H1 (cell line): ENCODE measurements at regions of chr11 and their contacts with region 1.

Region 1: GRCh38 chr11:64887757-64888405 is 9.5 kb upstream of the EHD1 start:
- DNase-seq: peak; percentile 56 to 98
- H3K4me3 ChIP-seq: peak overlapping the region in 2 of 4 experiments; percentile 10 to 33; a peak in 2 of 8 replicates
- H3K27ac ChIP-seq: no peak overlapping the region
- H3K4me1 ChIP-seq: peaks cover 0 to 11% (median 8%) of the 10 kb centered on the region in 4 experiments; a peak in 6 of 7 replicates
- H3K27me3 ChIP-seq: no peaks in the 10 kb centered on the region; a peak in 1 of 7 replicates
- CTCF ChIP-seq: peak in 2 of 3 experiments; percentile 81 to 92; a peak in 3 of 4 replicates
- EP300 ChIP-seq: no peak
- POLR2A ChIP-seq: no peak
- RAD21 ChIP-seq: peak; percentile 32 to 49

Region 2: GRCh38 chr11:64787526-64788320 is 100.2 kb before region 1 on chr11:
- CTCF ChIA-PET with region 1: no interaction called
- POLR2A ChIA-PET with region 1: no interaction called
- DNase-seq: peak in 1 of 2 experiments; percentile 89
- H3K4me3 ChIP-seq: no peak overlapping the region
- H3K27ac ChIP-seq: no peak overlapping the region
- H3K4me1 ChIP-seq: no peaks in the 10 kb centered on the region
- H3K27me3 ChIP-seq: no peaks in the 10 kb centered on the region
- CTCF ChIP-seq: peak; percentile 87 to 91 (median 90)
- EP300 ChIP-seq: no peak
- POLR2A ChIP-seq: no peak
- RAD21 ChIP-seq: peak; percentile 73 to 82

Region 3: DNA sequence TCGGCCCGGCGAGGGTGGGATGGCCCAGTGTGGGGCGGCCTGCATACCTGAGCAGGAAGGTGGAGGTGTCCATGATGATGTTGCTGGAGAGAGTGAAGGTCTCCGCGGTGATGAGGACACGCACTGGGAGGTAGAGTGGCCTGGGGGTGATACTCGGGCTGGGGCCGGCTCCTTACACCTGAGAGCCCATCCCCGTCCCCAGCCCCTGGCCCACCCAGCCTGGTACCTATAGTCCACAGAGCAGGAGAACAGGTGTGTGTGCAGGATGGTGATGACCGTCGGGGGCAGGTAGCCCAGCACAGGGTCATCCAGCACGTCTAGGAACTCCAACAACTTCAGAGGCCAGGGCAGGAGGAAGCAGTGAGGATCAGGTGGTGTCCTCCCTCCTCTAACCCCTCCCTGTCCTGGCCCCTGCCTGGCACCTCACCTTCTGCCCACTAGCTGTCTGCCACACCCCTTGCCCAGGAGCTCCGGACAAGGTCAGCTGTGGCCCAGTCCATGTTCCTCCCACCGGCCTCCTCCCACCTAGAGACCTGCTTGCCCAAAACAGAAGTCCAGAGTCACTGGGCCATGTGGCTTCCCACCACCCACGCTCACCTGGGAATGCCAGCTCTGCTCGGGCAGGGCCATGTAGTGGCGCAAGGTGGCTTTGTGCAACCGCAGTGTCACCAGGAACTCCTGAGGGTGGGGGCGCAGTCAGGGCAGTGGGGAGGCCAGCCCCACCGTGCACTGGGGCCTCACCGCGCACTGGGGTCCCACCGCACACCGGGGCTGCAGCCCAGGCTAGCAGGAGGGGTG is 17.8 kb after region 1 on chr11:
- CTCF ChIA-PET with region 1: interaction called, 11 read pairs
- POLR2A ChIA-PET with region 1: interaction called, 3 read pairs
- DNase-seq: no peak
- H3K4me3 ChIP-seq: no peak overlapping the region
- H3K27ac ChIP-seq: no peak overlapping the region
- H3K4me1 ChIP-seq: no peaks in the 10 kb centered on the region
- H3K27me3 ChIP-seq: no peaks in the 10 kb centered on the region
- CTCF ChIP-seq: no peak
- EP300 ChIP-seq: no peak
- POLR2A ChIP-seq: no peak
- RAD21 ChIP-seq: no peak